ENCODE measurements at regions of chr19 and their contacts with region 1.

Region 1: DNA sequence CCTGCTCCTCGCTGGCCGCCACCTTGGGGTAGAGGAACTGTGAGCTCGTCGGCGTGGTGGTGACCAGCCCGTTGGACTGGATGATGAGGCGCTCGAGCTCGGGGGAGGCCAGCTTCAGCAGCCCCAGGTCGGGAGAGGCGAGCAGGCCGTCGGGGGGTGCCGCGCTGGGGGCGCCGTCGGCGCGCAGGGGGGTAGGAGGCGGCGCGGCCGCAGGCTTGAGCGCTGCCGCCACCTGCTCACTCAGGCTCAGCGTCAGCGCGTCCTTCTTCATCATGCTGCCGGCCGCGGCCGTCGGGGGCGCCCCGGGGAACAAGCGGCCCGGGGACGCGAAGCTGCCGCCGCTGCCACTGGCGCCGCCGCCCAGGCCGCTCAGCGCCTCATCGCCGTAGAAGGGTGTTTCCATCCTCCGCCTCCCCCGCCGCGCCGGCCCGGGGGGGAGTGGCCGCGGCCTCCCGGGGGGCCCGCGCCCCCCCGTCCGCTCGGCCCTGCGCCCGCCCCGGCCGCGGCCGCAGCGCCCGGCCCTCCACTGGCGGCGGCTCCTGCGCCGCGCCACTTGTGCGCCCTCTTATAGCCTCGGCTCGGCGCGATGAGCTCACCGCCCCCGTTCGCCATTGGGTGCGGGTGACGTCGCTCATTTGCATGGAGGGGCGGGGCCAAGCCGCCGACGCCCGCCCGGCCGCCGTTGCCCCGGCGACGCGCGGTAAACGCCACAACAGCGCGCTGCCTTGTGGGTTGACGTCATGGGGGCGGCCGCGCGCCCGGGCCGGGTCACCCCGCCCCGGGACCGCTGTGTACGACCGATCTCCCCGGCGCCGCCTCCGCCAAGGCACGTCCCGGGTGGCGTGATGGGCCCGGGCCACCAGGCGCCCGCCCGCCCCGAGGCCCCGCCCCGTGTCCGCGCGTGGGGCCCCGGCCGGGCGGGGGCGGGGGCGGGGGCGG is at the start of gene JUND:
- DNase-seq: peak; percentile 95
- H3K4me3 ChIP-seq: peak within 1 kb of the TSS; percentile 74 to 92
- H3K27ac ChIP-seq: peak within 1 kb of the TSS; percentile 99 to 100
- H3K4me1 ChIP-seq: peaks cover 9 to 16% of the 10 kb centered on the region in 2 experiments; a peak in 3 of 4 replicates
- H3K27me3 ChIP-seq: no peaks in the 10 kb centered on the region
- CTCF ChIP-seq: 0 out of 2 replicates have a peak, but pooled peaks have one; percentile 5
- EP300 ChIP-seq: 0 out of 4 replicates have a peak, but pooled peaks of 1 of the 2 experiments have one; percentile 4
- RAD21 ChIP-seq: no peak
- polyA plus RNA-seq, gene JUND: 92.5 and 115 TPM in 2 replicates

Region 2: GRCh38 chr19:18074190-18074589 is 207.2 kb before region 1 on chr19:
- CTCF ChIA-PET with region 1: no interaction called
- POLR2A ChIA-PET with region 1: no interaction called
- DNase-seq: peak; percentile 11
- H3K4me3 ChIP-seq: no peak overlapping the region
- H3K27ac ChIP-seq: no peak overlapping the region
- H3K4me1 ChIP-seq: no peaks in the 10 kb centered on the region
- H3K27me3 ChIP-seq: no peaks in the 10 kb centered on the region
- CTCF ChIP-seq: no peak
- EP300 ChIP-seq: no peak
- RAD21 ChIP-seq: no peak

Region 3: DNA sequence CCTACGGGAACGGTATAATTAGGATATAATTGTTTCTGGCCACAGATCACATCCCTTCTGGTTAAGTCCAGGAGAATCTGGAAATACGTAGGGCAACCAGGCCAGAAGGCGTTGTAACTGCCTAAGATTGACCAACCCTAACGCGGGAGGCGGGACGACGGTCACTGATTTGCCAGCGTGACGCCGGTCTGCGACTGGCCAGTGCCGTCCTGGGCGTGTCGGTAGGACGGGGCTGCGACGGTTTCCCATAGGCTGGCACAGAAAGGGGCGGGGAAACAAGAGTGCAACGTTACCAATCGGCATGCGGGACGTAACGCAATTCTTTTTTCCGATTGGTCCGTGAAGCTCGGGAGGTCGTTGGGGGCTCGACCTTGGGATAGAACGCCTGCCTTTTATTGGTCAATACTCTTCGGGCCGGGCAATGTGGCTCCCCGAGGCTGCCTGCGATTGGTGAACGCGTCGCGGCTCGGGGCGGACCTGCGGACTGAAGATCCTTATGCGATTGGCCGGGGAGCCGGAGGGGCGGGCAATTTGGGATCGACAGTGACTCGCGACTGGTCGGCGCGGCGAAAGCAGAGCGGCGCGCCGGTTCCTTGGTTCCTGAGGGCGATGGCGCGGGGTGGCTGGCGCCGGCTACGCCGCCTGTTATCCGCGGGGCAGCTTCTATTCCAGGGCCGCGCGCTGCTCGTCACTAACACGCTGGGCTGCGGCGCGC is 88.5 kb before region 1 on chr19 and contains the start of gene MPV17L2:
- CTCF ChIA-PET with region 1: interaction called, 15 read pairs
- POLR2A ChIA-PET with region 1: interaction called, 7 read pairs
- DNase-seq: peak; percentile 93
- H3K4me3 ChIP-seq: peak within 1 kb of the TSS; percentile 72 to 94
- H3K27ac ChIP-seq: peak within 1 kb of the TSS; percentile 82 to 84
- H3K4me1 ChIP-seq: peaks cover 9 to 26% of the 10 kb centered on the region in 2 experiments; a peak in 2 of 4 replicates
- H3K27me3 ChIP-seq: no peaks in the 10 kb centered on the region
- CTCF ChIP-seq: no peak
- EP300 ChIP-seq: peak in 1 of 2 experiments; percentile 48; a peak in 1 of 4 replicates
- RAD21 ChIP-seq: no peak
- polyA plus RNA-seq, gene MPV17L2: 17.5 and 20.6 TPM in 2 replicates

Region 4: DNA sequence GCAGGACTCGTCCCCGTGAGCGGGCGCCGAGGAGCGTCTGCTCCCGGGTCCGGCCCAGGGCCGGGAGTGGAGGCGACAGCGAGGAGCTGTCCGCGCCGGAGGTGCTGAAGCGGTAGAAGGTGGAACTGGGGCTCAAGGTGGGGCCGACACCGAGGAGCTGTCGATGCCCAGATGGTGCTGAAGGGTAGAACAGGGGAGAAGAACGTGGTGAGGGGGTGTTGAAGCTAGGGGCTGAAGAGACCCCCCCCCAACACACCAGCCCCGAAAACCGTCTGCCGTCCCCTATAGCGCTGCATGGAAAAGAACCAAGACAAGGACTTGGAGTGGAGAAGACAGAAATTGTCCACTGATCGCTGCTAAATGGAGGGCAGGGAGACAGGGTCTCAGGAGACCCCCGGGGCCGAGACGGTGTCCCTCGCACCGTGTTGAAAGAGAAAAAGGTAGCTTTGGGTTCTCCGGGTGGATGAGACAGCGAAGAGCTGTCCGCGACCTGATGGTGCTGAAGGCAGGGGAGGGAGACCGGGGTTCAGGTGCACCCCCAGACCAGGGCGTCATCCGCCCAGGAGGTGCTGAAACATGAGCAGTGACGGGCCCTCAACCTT is 48.0 kb before region 1 on chr19:
- CTCF ChIA-PET with region 1: interaction called, 14 read pairs
- POLR2A ChIA-PET with region 1: no interaction called
- DNase-seq: peak; percentile 83
- H3K4me3 ChIP-seq: peak overlapping the region; percentile 35 to 42; a peak in 3 of 4 replicates
- H3K27ac ChIP-seq: no peak overlapping the region; a peak in 1 of 4 replicates
- H3K4me1 ChIP-seq: peaks cover 0 to 11% of the 10 kb centered on the region in 2 experiments; a peak in 1 of 4 replicates
- H3K27me3 ChIP-seq: no peaks in the 10 kb centered on the region
- CTCF ChIP-seq: no peak
- EP300 ChIP-seq: no peak
- RAD21 ChIP-seq: no peak

Region 5: GRCh38 chr19:18291590-18292461 is 10.5 kb after region 1 on chr19:
- CTCF ChIA-PET with region 1: interaction called, 67 read pairs
- POLR2A ChIA-PET with region 1: interaction called, 112 read pairs
- DNase-seq: peak; percentile 89
- H3K4me3 ChIP-seq: peak overlapping the region; percentile 58 to 71
- H3K27ac ChIP-seq: peak overlapping the region; percentile 72 to 94
- H3K4me1 ChIP-seq: peaks cover 8 to 22% of the 10 kb centered on the region in 2 experiments; a peak in 2 of 4 replicates
- H3K27me3 ChIP-seq: no peaks in the 10 kb centered on the region
- CTCF ChIP-seq: no peak
- EP300 ChIP-seq: peak; percentile 16 to 22; a peak in 2 of 4 replicates
- RAD21 ChIP-seq: no peak

Region 6: GRCh38 chr19:18322759-18323460 is 41.6 kb after region 1 on chr19 and contains the start of gene LSM4:
- CTCF ChIA-PET with region 1: interaction called, 216 read pairs
- POLR2A ChIA-PET with region 1: interaction called, 97 read pairs
- DNase-seq: peak; percentile 97
- H3K4me3 ChIP-seq: peak within 1 kb of the TSS; percentile 72 to 89
- H3K27ac ChIP-seq: peak within 1 kb of the TSS; percentile 88 to 93
- H3K4me1 ChIP-seq: peaks cover 19 to 30% of the 10 kb centered on the region in 2 experiments; a peak in 3 of 4 replicates
- H3K27me3 ChIP-seq: no peaks in the 10 kb centered on the region
- CTCF ChIP-seq: peak; percentile 22
- EP300 ChIP-seq: no peak; a peak in 1 of 4 replicates
- RAD21 ChIP-seq: peak; percentile 55
- polyA plus RNA-seq, gene LSM4: 235 and 277 TPM in 2 replicates

Region 7: GRCh38 chr19:18340190-18340989 is 59.0 kb after region 1 on chr19 and contains the start of gene PGPEP1:
- CTCF ChIA-PET with region 1: interaction called, 34 read pairs
- POLR2A ChIA-PET with region 1: interaction called, 6 read pairs
- DNase-seq: peak; percentile 96
- H3K4me3 ChIP-seq: peak within 1 kb of the TSS; percentile 59 to 90
- H3K27ac ChIP-seq: no peak within 1 kb of the TSS; a peak in 1 of 4 replicates
- H3K4me1 ChIP-seq: peaks cover 0 to 9% of the 10 kb centered on the region in 2 experiments; a peak in 1 of 4 replicates
- H3K27me3 ChIP-seq: no peaks in the 10 kb centered on the region
- CTCF ChIP-seq: no peak
- EP300 ChIP-seq: no peak
- RAD21 ChIP-seq: no peak
- polyA plus RNA-seq, gene PGPEP1: 13.8 and 13.9 TPM in 2 replicates

Region 8: DNA sequence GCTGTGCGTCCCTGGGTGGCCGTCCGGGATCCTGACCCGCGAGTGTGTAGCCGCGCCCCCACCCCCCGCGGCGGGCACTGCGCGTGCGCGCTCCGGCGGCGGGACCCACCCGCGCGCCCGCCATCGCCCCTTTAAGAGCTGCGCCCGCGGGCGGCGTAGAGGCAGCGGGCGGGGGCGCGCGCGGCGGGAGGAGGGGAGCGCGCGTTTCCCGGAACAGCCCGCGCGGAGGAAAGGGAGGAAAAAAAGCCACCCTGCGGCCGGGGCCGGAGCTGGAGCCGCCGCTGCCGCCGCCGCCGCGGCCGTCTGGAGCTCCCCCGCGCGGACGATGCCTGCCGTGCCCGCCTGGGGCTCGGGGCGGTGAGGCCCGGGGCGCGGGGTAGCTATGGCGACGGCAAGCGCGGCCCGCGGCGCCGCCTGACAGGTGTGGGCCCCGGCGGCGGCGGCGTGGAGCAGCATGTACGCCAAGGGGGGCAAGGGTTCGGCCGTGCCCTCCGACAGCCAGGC is 137.9 kb after region 1 on chr19 and contains the start of gene SSBP4:
- CTCF ChIA-PET with region 1: interaction called, 59 read pairs
- POLR2A ChIA-PET with region 1: interaction called, 7 read pairs
- DNase-seq: peak; percentile 97
- H3K4me3 ChIP-seq: peak within 1 kb of the TSS; percentile 68 to 74
- H3K27ac ChIP-seq: peak within 1 kb of the TSS; percentile 89 to 93; a peak in 3 of 4 replicates
- H3K4me1 ChIP-seq: peaks cover 41 to 53% of the 10 kb centered on the region in 2 experiments; a peak in 3 of 4 replicates
- H3K27me3 ChIP-seq: no peaks in the 10 kb centered on the region
- CTCF ChIP-seq: peak; percentile 12; the same call in 1 of the 2 replicates
- EP300 ChIP-seq: peak; percentile 59 to 65; a peak in 2 of 4 replicates
- RAD21 ChIP-seq: no peak
- polyA plus RNA-seq, gene SSBP4: 22.5 and 24.9 TPM in 2 replicates